B cell (primary cell): ENCODE measurements at regions of chr12 and their contacts with region 1.

Region 1: GRCh38 chr12:132614861-132615578 is 3.6 kb upstream of the P2RX2 start:
- DNase-seq: peak; percentile 86
- ATAC-seq: peak; percentile 84
- H3K4me3 ChIP-seq: no peak overlapping the region
- H3K4me3 Mint-ChIP-seq: peak overlapping the region; percentile 16
- H3K27ac ChIP-seq: no peak overlapping the region
- H3K27ac Mint-ChIP-seq: peak overlapping the region; percentile 32
- H3K4me1 ChIP-seq: peaks cover 14 to 19% of the 10 kb centered on the region in 2 donors
- H3K4me1 Mint-ChIP-seq: peaks cover 16% of the 10 kb centered on the region
- H3K27me3 ChIP-seq: peaks cover 0 to 53% (median 33%) of the 10 kb centered on the region in 4 experiments
- H3K27me3 Mint-ChIP-seq: peaks cover 41% of the 10 kb centered on the region
- CTCF ChIP-seq: peak; percentile 89

Region 2: DNA sequence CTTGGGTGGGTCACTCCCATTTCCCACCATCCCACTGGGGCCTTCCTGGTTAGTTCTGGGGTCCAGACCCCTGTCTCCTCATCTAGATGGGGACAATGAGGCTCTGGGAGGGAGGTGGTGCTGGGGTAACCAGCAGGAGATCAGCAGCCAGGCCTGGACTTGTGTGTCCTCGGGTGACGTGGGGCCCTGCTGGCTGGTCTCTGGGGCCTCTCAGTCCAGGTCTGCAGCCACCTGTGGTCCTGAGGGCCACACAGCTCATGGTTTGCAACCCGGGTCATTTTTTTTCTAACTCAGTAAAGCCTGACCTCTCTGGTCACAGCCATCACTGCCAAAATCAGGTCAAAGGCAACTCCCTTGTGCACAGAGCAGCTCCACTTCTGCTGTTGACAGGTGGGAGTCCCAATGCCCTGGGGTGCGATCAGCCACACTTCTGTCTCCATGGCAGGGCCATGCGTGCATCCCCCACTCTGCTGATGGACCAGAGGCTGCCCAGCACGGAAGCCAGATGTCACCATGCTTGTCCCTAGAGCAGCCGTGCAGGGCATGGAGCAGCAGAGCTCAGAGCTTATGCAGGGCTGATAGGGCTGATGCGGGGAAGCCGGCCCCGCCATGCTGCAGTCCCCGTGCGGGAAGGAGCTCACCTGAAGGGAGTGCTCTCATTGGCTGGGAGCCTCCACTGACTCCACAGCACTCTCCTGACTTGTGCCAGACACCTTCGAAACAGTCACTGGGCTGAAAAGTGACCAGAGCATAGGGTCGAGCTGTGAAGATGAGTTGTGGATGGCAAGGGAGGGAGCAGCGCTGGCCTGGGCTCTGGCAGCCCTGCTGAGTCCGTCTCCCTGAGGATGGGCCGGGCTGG is 1410.4 kb before region 1 on chr12:
- CTCF ChIA-PET with region 1: no interaction called
- POLR2A ChIA-PET with region 1: no interaction called
- intact Hi-C with region 1: no loop called
- DNase-seq: no peak
- ATAC-seq: no peak
- H3K4me3 ChIP-seq: no peak overlapping the region
- H3K4me3 Mint-ChIP-seq: no peak overlapping the region
- H3K27ac ChIP-seq: no peak overlapping the region
- H3K27ac Mint-ChIP-seq: no peak overlapping the region
- H3K4me1 ChIP-seq: no peaks in the 10 kb centered on the region
- H3K4me1 Mint-ChIP-seq: no peaks in the 10 kb centered on the region
- H3K27me3 ChIP-seq: no peaks in the 10 kb centered on the region
- H3K27me3 Mint-ChIP-seq: no peaks in the 10 kb centered on the region
- CTCF ChIP-seq: no peak

Region 3: GRCh38 chr12:132600048-132601032 is 14.7 kb before region 1 on chr12:
- CTCF ChIA-PET with region 1: interaction called, 15 read pairs
- POLR2A ChIA-PET with region 1: no interaction called
- intact Hi-C with region 1: loop called (anchors 1 kb)
- DNase-seq: peak; percentile 65
- ATAC-seq: peak; percentile 54
- H3K4me3 ChIP-seq: peak overlapping the region in 4 of 5 experiments; percentile 35 to 64 (median 49)
- H3K4me3 Mint-ChIP-seq: peak overlapping the region; percentile 84
- H3K27ac ChIP-seq: no peak overlapping the region
- H3K27ac Mint-ChIP-seq: peak overlapping the region; percentile 53
- H3K4me1 ChIP-seq: peaks cover 22 to 29% of the 10 kb centered on the region in 2 donors
- H3K4me1 Mint-ChIP-seq: peaks cover 26% of the 10 kb centered on the region
- H3K27me3 ChIP-seq: peaks cover 0 to 41% (median 11%) of the 10 kb centered on the region in 4 experiments
- H3K27me3 Mint-ChIP-seq: peaks cover 12% of the 10 kb centered on the region
- CTCF ChIP-seq: peak; percentile 6

Region 4: DNA sequence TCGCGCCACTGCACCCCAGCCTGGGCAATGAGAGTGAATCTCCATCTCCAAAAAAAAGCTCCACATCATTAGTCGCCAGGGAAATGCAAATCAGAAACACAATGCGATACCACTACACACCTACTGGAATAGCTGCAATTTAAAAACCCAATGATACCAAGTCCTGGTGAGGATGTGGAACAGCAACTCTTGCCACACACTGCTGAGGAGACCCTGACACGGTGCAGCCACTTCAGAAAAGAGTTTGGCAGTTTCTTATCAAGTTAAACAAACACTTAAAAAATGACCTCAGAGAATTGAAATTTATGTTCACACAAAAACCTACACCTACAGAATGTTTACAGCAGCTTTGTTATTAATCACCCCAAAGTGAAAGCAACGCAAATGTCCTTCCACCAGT is 15.7 kb after region 1 on chr12:
- CTCF ChIA-PET with region 1: interaction called, 10 read pairs
- POLR2A ChIA-PET with region 1: no interaction called
- intact Hi-C with region 1: no loop called
- DNase-seq: no peak
- ATAC-seq: no peak
- H3K4me3 ChIP-seq: no peak overlapping the region
- H3K4me3 Mint-ChIP-seq: no peak overlapping the region
- H3K27ac ChIP-seq: no peak overlapping the region
- H3K27ac Mint-ChIP-seq: no peak overlapping the region
- H3K4me1 ChIP-seq: peaks cover 0 to 25% of the 10 kb centered on the region in 2 donors
- H3K4me1 Mint-ChIP-seq: peaks cover 20% of the 10 kb centered on the region
- H3K27me3 ChIP-seq: no peaks in the 10 kb centered on the region
- H3K27me3 Mint-ChIP-seq: no peaks in the 10 kb centered on the region
- CTCF ChIP-seq: no peak

Region 5: GRCh38 chr12:132754160-132754932 is 139.3 kb after region 1 on chr12:
- CTCF ChIA-PET with region 1: no interaction called
- POLR2A ChIA-PET with region 1: no interaction called
- intact Hi-C with region 1: no loop called
- DNase-seq: no peak
- ATAC-seq: peak; percentile 36
- H3K4me3 ChIP-seq: no peak overlapping the region
- H3K4me3 Mint-ChIP-seq: no peak overlapping the region
- H3K27ac ChIP-seq: no peak overlapping the region
- H3K27ac Mint-ChIP-seq: no peak overlapping the region
- H3K4me1 ChIP-seq: no peaks in the 10 kb centered on the region
- H3K4me1 Mint-ChIP-seq: peaks cover 10% of the 10 kb centered on the region
- H3K27me3 ChIP-seq: no peaks in the 10 kb centered on the region
- H3K27me3 Mint-ChIP-seq: no peaks in the 10 kb centered on the region
- CTCF ChIP-seq: no peak